ENCODE measurements at regions of chr3 and their contacts with region 1.

Region 1: GRCh38 chr3:72384602-72385001 is 463.6 kb downstream of the SHQ1 start:
- DNase-seq: no peak
- ATAC-seq: no peak
- H3K4me3 Mint-ChIP-seq: no peak overlapping the region
- H3K27ac Mint-ChIP-seq: no peak overlapping the region
- H3K4me1 Mint-ChIP-seq: peaks cover 80% of the 10 kb centered on the region
- H3K27me3 Mint-ChIP-seq: no peaks in the 10 kb centered on the region
- CTCF ChIP-seq: no peak

Region 2: DNA sequence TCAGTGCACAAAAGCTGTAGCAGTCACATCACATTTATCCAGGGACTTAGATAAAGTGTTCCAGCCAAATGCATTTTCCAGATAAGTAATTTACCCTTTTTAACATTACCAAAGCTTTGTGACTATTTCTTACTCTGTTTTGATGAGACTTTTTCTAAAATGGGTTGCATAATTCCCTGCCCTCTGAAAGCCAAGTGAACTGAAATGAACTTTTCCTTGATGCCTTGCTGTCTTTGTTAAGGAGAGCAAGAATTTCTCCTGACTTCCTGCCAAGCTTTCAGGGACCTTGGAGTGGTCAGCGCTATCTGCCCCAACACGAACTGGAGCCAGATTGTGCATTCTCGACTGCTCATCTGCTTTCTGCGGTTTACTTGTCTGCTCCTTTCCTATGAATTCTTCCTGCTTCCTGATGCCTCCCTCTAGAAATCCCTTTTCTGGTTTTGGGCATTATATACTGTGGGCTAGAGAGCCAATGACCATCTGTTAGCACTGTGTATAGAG is 694.2 kb before region 1 on chr3:
- CTCF ChIA-PET with region 1: no interaction called
- POLR2A ChIA-PET with region 1: no interaction called
- intact Hi-C with region 1: no loop called
- DNase-seq: no peak
- ATAC-seq: no peak
- H3K4me3 Mint-ChIP-seq: no peak overlapping the region
- H3K27ac Mint-ChIP-seq: no peak overlapping the region
- H3K4me1 Mint-ChIP-seq: no peaks in the 10 kb centered on the region
- H3K27me3 Mint-ChIP-seq: no peaks in the 10 kb centered on the region
- CTCF ChIP-seq: no peak

Region 3: GRCh38 chr3:72401005-72401545 is 16.5 kb after region 1 on chr3:
- CTCF ChIA-PET with region 1: no interaction called
- POLR2A ChIA-PET with region 1: no interaction called
- intact Hi-C with region 1: loop called (anchors 2 kb)
- DNase-seq: no peak
- ATAC-seq: no peak
- H3K4me3 Mint-ChIP-seq: no peak overlapping the region
- H3K27ac Mint-ChIP-seq: no peak overlapping the region
- H3K4me1 Mint-ChIP-seq: peaks cover 80% of the 10 kb centered on the region
- H3K27me3 Mint-ChIP-seq: no peaks in the 10 kb centered on the region
- CTCF ChIP-seq: no peak

Region 4: DNA sequence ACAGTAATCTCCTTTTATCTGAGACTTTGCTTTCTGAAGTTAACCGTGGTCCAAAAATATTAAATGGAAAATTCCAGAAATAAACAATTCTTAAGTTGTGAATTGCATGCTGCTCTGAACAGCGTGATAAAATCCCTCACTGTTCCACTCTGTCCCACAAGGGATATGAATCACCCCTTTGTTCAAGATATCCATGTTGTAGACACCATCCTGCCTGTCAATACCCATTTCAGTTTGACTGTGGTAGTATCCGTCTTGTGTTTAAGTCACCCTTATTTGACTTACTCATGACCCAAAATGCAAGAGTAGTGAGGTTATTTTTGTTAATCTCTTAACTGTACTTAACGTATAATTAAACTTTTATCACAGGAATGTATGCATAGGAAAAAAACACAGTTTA is 28.6 kb after region 1 on chr3:
- CTCF ChIA-PET with region 1: no interaction called
- POLR2A ChIA-PET with region 1: no interaction called
- intact Hi-C with region 1: no loop called
- DNase-seq: no peak
- ATAC-seq: no peak
- H3K4me3 Mint-ChIP-seq: no peak overlapping the region
- H3K27ac Mint-ChIP-seq: no peak overlapping the region
- H3K4me1 Mint-ChIP-seq: peaks cover 81% of the 10 kb centered on the region
- H3K27me3 Mint-ChIP-seq: no peaks in the 10 kb centered on the region
- CTCF ChIP-seq: no peak

Region 5: GRCh38 chr3:72505539-72506405 is 121.2 kb after region 1 on chr3:
- CTCF ChIA-PET with region 1: no interaction called
- POLR2A ChIA-PET with region 1: no interaction called
- intact Hi-C with region 1: no loop called
- DNase-seq: no peak
- ATAC-seq: no peak
- H3K4me3 Mint-ChIP-seq: no peak overlapping the region
- H3K27ac Mint-ChIP-seq: no peak overlapping the region
- H3K4me1 Mint-ChIP-seq: no peaks in the 10 kb centered on the region
- H3K27me3 Mint-ChIP-seq: peaks cover 17% of the 10 kb centered on the region
- CTCF ChIP-seq: no peak

Region 6: GRCh38 chr3:72591522-72592421 is 207.2 kb after region 1 on chr3:
- CTCF ChIA-PET with region 1: no interaction called
- POLR2A ChIA-PET with region 1: no interaction called
- intact Hi-C with region 1: no loop called
- DNase-seq: no peak
- ATAC-seq: no peak
- H3K4me3 Mint-ChIP-seq: no peak overlapping the region
- H3K27ac Mint-ChIP-seq: no peak overlapping the region
- H3K4me1 Mint-ChIP-seq: no peaks in the 10 kb centered on the region
- H3K27me3 Mint-ChIP-seq: peaks cover 34% of the 10 kb centered on the region
- CTCF ChIP-seq: no peak

Measured in activated B cell treated with CpG ODN at 0.5 μM for 24 hours (primary cell).